Endothelial cell of umbilical vein (primary cell): ENCODE measurements at regions of chr2 and their contacts with region 1.

Region 1: GRCh38 chr2:128196471-128196931 is 105.5 kb downstream of the UGGT1 start:
- DNase-seq: peak; percentile 70
- H3K4me3 ChIP-seq: peak overlapping the region in 1 of 3 experiments; percentile 37
- H3K27ac ChIP-seq: peak overlapping the region; percentile 57
- H3K4me1 ChIP-seq: peaks cover 17% of the 10 kb centered on the region
- H3K27me3 ChIP-seq: no peaks in the 10 kb centered on the region
- CTCF ChIP-seq: no peak
- POLR2A ChIP-seq: no peak

Region 2: GRCh38 chr2:128169497-128169896 is 27.0 kb before region 1 on chr2:
- CTCF ChIA-PET with region 1: no interaction called
- POLR2A ChIA-PET with region 1: interaction called, 5 read pairs
- dilution Hi-C with region 1: no loop called
- intact Hi-C with region 1: loop called (anchors 1 kb)
- DNase-seq: peak; percentile 91
- H3K4me3 ChIP-seq: no peak overlapping the region
- H3K27ac ChIP-seq: peak overlapping the region; percentile 89
- H3K4me1 ChIP-seq: peaks cover 31% of the 10 kb centered on the region
- H3K27me3 ChIP-seq: no peaks in the 10 kb centered on the region
- CTCF ChIP-seq: no peak
- POLR2A ChIP-seq: peak; percentile 52

Region 3: DNA sequence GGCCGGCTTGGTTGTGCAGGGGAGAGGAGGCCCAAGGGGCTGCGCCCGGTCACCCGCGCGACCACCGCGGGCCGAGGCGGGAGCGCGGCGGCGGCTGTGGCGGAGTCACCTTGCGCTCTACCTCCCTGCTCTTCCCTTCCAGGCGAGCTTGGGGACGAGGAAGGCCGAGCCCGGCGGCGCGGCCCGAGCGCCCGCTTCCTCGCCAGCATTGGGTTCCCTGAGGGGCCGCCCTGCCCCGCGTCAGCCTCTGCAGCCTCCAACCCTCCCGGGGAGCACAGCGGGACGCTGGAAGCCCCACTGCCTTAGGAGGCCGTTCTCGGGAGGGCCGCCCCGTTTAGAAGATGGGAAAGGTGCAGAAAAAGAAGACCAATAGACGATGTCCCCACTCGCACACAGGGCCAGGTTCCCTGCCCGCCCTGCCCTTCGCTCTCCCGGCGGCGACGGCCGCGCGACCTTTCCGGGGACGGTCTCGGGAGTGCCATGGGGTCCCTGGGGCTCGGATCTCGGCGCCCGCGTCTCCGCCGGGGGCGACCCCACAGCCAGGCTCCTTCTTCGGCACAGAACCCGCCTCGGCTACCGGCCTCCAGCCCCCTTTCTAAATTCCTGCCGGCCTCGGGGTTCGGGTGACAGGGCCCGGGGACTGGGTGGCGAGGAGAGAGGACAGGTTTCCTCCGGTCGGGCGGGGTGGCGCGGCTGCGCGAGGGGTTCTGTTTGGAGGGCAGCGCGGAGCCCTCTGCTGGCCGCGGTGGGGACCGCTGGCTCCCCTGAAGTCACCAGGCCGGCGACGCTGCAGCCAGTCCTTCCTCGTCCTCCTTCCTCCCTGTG is 36.7 kb after region 1 on chr2:
- CTCF ChIA-PET with region 1: no interaction called
- POLR2A ChIA-PET with region 1: no interaction called
- dilution Hi-C with region 1: no loop called
- intact Hi-C with region 1: loop called (anchors 2 kb)
- DNase-seq: peak; percentile 72
- H3K4me3 ChIP-seq: peak overlapping the region; percentile 52 to 70 (median 57)
- H3K27ac ChIP-seq: no peak overlapping the region
- H3K4me1 ChIP-seq: peaks cover 13% of the 10 kb centered on the region
- H3K27me3 ChIP-seq: no peaks in the 10 kb centered on the region
- CTCF ChIP-seq: peak; percentile 83 to 98
- POLR2A ChIP-seq: no peak